K562 (cell line): ENCODE measurements at regions of chr3 and their contacts with region 1.

Region 1: DNA sequence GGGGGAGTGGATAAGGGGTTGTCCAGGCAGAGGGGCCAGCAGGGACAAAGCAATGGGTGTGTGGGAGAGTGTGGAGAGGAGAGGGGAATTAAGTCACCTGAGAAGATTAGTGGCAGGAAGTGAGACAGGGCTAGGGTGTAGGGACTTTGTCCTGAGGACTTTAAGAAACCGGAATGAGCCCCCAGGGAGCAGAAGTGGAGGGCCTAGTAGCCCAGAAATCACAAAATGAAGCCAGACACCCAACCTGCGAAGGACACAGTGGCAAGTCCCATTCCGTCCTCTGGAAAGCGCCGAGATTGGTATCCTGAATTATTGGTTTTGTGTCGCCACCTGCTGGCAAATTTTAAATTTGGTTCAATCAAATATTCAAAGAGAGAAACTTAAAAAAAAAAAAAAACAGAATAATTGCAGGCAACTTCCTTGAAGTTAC is 78.0 kb upstream of the SLC25A36 start:
- DNase-seq: peak; percentile 14 to 63 (median 25)
- ATAC-seq: peak; percentile 80
- H3K4me3 ChIP-seq: no peak overlapping the region
- H3K27ac ChIP-seq: no peak overlapping the region
- H3K4me1 ChIP-seq: no peaks in the 10 kb centered on the region
- H3K27me3 ChIP-seq: no peaks in the 10 kb centered on the region
- CTCF ChIP-seq: peak; percentile 51 to 73 (median 53)
- EP300 ChIP-seq: no peak
- POLR2A ChIP-seq: no peak
- RAD21 ChIP-seq: peak; percentile 52 to 65

Region 2: GRCh38 chr3:139745831-139746230 is 1117.8 kb before region 1 on chr3:
- CTCF ChIA-PET with region 1: no interaction called
- POLR2A ChIA-PET with region 1: no interaction called
- in situ Hi-C with region 1: no loop called
- intact Hi-C with region 1: no loop called
- DNase-seq: peak in 1 of 4 experiments; percentile 12
- ATAC-seq: no peak
- H3K4me3 ChIP-seq: no peak overlapping the region
- H3K27ac ChIP-seq: no peak overlapping the region
- H3K4me1 ChIP-seq: no peaks in the 10 kb centered on the region
- H3K27me3 ChIP-seq: no peaks in the 10 kb centered on the region
- CTCF ChIP-seq: no peak
- EP300 ChIP-seq: no peak
- POLR2A ChIP-seq: no peak
- RAD21 ChIP-seq: no peak

Region 3: GRCh38 chr3:139935016-139935865 is 928.4 kb before region 1 on chr3 and contains the start of gene CLSTN2:
- CTCF ChIA-PET with region 1: no interaction called
- POLR2A ChIA-PET with region 1: no interaction called
- in situ Hi-C with region 1: no loop called
- intact Hi-C with region 1: loop called (anchors 5 kb)
- DNase-seq: peak in 2 of 4 experiments; percentile 4 to 18
- ATAC-seq: peak; percentile 55
- H3K4me3 ChIP-seq: no peak within 1 kb of the TSS
- H3K27ac ChIP-seq: no peak within 1 kb of the TSS
- H3K4me1 ChIP-seq: peaks cover 0 to 15% of the 10 kb centered on the region in 2 experiments; a peak in 2 of 5 replicates
- H3K27me3 ChIP-seq: peaks cover 3 to 24% of the 10 kb centered on the region in 2 experiments; a peak in 2 of 5 replicates
- CTCF ChIP-seq: no peak
- EP300 ChIP-seq: no peak
- POLR2A ChIP-seq: no peak
- RAD21 ChIP-seq: no peak
- polyA plus RNA-seq, gene CLSTN2: 0.04 TPM in 1 of 2 experiments, not detected in the other

Region 4: DNA sequence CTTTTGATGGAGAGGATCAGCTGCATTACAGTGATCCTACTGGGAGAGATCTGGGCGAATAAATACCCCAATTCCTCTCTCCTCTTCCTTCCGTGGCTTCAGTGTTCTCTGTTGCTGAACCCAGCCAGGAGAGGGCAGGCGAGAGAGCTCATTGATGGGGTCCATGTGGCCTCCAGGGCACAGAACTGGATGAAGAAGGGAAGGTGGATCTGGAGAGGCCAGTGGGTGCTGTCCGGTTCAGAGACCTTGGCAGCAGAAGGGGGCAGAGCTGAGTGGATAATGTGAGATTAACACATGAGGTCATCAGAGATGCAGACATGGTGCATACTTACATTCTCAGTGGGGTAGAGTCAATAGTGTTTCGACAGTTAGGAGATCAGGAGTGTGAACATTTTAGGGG is 735.0 kb before region 1 on chr3:
- CTCF ChIA-PET with region 1: no interaction called
- POLR2A ChIA-PET with region 1: no interaction called
- in situ Hi-C with region 1: loop called (anchors 25 kb)
- intact Hi-C with region 1: loop called (anchors 2 kb)
- DNase-seq: peak; percentile 36 to 55 (median 45)
- ATAC-seq: peak; percentile 95
- H3K4me3 ChIP-seq: no peak overlapping the region
- H3K27ac ChIP-seq: no peak overlapping the region
- H3K4me1 ChIP-seq: no peaks in the 10 kb centered on the region
- H3K27me3 ChIP-seq: no peaks in the 10 kb centered on the region
- CTCF ChIP-seq: peak; percentile 71 to 78 (median 75)
- EP300 ChIP-seq: no peak
- POLR2A ChIP-seq: no peak
- RAD21 ChIP-seq: peak; percentile 67 to 70